Panc1 (cell line): ENCODE measurements at regions of chr19 and their contacts with region 1.

Region 1: DNA sequence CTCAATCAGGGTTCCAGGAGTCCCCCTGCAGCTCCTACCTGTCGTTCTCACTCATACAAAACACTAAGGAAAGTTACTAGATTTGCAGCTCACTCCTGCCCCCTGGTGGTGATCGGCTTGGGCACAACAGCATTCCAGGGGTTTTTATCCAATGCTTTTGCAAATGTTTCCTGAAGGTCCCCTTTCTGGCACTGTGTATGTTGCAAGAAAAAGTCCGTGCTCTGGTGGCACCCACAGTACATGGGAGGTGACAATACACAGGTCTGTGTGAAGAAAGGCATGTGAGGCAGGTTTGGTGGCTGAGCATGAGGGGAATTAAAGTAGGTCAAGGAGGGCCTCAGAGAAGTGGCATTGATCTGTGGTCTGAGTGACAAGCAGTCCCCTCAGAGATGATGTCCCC is 8.6 kb upstream of the TYK2 start:
- DNase-seq: peak; percentile 60
- ATAC-seq: peak; percentile 79
- H3K4me3 ChIP-seq: no peak overlapping the region
- H3K27ac ChIP-seq: no peak overlapping the region
- H3K4me1 ChIP-seq: no peaks in the 10 kb centered on the region
- H3K27me3 ChIP-seq: no peaks in the 10 kb centered on the region
- CTCF ChIP-seq: peak; percentile 87

Region 2: DNA sequence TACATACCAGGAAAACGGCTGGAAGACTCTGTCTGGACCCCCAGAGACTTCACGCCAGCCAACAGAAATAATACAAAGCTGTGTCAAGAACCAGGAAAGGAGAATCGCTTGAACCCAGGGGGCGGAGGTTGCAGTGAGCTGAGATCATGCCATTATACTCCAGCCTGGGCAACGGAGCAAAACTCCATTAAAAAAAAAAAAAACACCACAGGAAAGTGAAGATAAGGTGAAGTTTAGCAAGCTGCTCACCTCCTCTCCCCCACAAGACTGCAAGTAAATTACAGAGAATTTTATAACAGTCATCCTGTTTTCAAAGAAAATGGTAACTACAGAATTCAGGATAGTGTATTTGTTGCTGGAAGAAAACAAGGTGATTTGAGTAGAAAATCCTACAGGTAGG is 1272.4 kb before region 1 on chr19:
- CTCF ChIA-PET with region 1: no interaction called
- POLR2A ChIA-PET with region 1: no interaction called
- in situ Hi-C with region 1: no loop called
- intact Hi-C with region 1: no loop called
- DNase-seq: no peak
- ATAC-seq: no peak
- H3K4me3 ChIP-seq: no peak overlapping the region
- H3K27ac ChIP-seq: no peak overlapping the region
- H3K4me1 ChIP-seq: no peaks in the 10 kb centered on the region
- H3K27me3 ChIP-seq: no peaks in the 10 kb centered on the region
- CTCF ChIP-seq: no peak

Region 3: GRCh38 chr19:9785367-9786331 is 603.3 kb before region 1 on chr19:
- CTCF ChIA-PET with region 1: no interaction called
- POLR2A ChIA-PET with region 1: no interaction called
- in situ Hi-C with region 1: no loop called
- intact Hi-C with region 1: no loop called
- DNase-seq: peak; percentile 51
- ATAC-seq: peak; percentile 87
- H3K4me3 ChIP-seq: peak overlapping the region; percentile 61 to 66
- H3K27ac ChIP-seq: peak overlapping the region; percentile 82
- H3K4me1 ChIP-seq: peaks cover 7% of the 10 kb centered on the region; the same call in 1 of the 2 replicates
- H3K27me3 ChIP-seq: no peaks in the 10 kb centered on the region
- CTCF ChIP-seq: no peak

Region 4: DNA sequence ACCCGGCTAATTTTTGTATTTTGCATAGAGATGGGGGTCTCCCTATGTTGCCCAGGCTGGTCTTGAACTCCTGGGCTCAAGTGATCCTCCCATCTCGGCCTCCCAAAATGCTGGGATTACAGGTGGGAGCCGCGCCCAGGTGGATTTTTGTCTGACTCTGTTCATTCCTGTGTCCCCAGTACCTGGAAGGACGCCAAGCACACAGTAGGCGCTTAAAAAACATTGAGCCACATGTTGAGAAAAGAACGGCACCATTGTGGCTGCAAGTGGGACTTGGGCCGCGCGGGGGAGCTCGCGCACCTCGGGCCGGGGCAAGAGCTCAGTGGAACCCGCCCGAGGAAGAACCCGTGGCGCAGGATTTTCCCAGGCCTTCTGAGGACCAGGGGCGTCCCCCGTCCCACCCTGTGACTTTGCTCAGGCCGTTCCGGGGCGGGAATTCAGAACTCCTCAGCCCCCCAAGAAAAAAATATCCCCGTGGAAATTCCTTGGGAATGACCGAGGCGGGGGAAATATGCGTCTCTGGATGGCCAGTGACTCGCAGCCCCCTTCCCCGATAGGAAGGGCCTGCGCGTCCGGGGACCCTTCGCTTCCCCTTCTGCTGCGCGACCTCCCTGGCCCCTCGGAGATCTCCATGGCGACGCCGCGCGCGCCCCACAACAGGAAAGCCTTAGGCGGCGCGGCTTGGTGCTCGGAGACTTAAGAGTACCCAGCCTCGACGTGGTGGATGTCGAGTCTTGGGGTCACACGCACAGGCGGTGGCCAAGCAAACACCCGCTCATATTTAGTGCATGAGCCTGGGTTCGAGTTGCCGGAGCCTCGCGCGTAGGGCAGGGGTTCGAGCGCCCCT is 119.4 kb before region 1 on chr19:
- CTCF ChIA-PET with region 1: interaction called, 17 read pairs
- POLR2A ChIA-PET with region 1: no interaction called
- in situ Hi-C with region 1: no loop called
- intact Hi-C with region 1: loop called (anchors 5 kb)
- DNase-seq: peak; percentile 33
- ATAC-seq: peak; percentile 70
- H3K4me3 ChIP-seq: peak overlapping the region; percentile 55 to 83
- H3K27ac ChIP-seq: peak overlapping the region; percentile 91
- H3K4me1 ChIP-seq: peaks cover 4% of the 10 kb centered on the region
- H3K27me3 ChIP-seq: no peaks in the 10 kb centered on the region
- CTCF ChIP-seq: peak; percentile 96

Region 5: DNA sequence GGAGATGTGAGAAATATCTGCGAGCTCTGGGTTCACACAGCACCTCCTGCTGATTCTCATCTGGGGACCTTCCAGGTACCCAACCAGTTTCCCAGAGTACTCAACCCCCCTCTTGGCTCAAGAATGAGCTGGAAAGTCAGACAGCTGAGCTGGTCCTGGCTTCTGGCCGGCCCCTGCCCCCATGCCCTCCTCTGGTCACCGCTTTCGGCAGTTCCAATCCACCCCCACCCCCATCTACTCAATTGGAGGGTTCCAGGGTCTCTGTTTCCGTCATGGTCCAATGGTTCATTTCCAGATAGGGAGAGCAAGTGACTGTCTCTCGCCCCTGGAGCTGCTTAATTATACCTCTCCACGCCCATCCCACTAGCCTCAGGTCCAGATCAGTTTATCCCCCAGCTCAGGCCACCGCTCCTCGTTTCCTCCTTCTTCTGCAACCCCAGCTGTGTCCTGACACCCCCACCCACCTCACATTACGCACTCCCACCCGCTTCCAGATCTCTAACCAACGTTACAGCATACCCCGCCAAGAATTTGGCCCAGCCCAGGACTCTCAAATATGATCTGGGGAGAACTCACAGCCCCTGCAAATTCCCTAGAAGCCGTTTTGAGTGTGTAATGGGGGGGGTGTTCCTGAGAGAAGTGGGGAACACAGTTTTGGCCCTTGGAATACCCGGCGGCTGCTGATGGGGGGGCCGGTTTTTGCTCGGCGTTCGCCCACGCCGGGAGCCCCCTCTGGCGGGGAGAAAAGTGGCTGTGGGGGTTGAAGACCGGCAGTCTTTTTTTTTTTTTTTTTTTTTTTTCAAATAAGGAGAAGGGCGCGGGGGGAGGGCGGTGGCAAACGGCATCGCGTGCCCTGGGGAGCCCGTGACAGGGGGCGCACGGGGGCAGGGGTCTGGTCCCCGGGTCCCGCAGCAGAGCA is 29.6 kb after region 1 on chr19:
- CTCF ChIA-PET with region 1: interaction called, 13 read pairs
- POLR2A ChIA-PET with region 1: no interaction called
- in situ Hi-C with region 1: no loop called
- intact Hi-C with region 1: no loop called
- DNase-seq: no peak
- ATAC-seq: peak; percentile 14
- H3K4me3 ChIP-seq: peak overlapping the region; percentile 51 to 72
- H3K27ac ChIP-seq: peak overlapping the region; percentile 79
- H3K4me1 ChIP-seq: peaks cover 13% of the 10 kb centered on the region
- H3K27me3 ChIP-seq: no peaks in the 10 kb centered on the region
- CTCF ChIP-seq: peak; percentile 38